Endothelial cell of umbilical vein (primary cell): ENCODE measurements at regions of chr4 and their contacts with region 1.

Region 1: GRCh38 chr4:42519803-42520417 is 122.6 kb downstream of the SHISA3 start:
- DNase-seq: peak; percentile 74
- H3K4me3 ChIP-seq: no peak overlapping the region
- H3K27ac ChIP-seq: no peak overlapping the region
- H3K4me1 ChIP-seq: no peaks in the 10 kb centered on the region
- H3K27me3 ChIP-seq: peaks cover 3 to 7% of the 10 kb centered on the region in 2 experiments
- CTCF ChIP-seq: peak; percentile 25 to 31
- POLR2A ChIP-seq: no peak

Region 2: GRCh38 chr4:42048407-42048806 is 471.5 kb before region 1 on chr4:
- CTCF ChIA-PET with region 1: no interaction called
- POLR2A ChIA-PET with region 1: no interaction called
- dilution Hi-C with region 1: no loop called
- intact Hi-C with region 1: no loop called
- DNase-seq: peak; percentile 75
- H3K4me3 ChIP-seq: no peak overlapping the region
- H3K27ac ChIP-seq: no peak overlapping the region
- H3K4me1 ChIP-seq: peaks cover 6% of the 10 kb centered on the region
- H3K27me3 ChIP-seq: no peaks in the 10 kb centered on the region
- CTCF ChIP-seq: no peak
- POLR2A ChIP-seq: no peak

Region 3: DNA sequence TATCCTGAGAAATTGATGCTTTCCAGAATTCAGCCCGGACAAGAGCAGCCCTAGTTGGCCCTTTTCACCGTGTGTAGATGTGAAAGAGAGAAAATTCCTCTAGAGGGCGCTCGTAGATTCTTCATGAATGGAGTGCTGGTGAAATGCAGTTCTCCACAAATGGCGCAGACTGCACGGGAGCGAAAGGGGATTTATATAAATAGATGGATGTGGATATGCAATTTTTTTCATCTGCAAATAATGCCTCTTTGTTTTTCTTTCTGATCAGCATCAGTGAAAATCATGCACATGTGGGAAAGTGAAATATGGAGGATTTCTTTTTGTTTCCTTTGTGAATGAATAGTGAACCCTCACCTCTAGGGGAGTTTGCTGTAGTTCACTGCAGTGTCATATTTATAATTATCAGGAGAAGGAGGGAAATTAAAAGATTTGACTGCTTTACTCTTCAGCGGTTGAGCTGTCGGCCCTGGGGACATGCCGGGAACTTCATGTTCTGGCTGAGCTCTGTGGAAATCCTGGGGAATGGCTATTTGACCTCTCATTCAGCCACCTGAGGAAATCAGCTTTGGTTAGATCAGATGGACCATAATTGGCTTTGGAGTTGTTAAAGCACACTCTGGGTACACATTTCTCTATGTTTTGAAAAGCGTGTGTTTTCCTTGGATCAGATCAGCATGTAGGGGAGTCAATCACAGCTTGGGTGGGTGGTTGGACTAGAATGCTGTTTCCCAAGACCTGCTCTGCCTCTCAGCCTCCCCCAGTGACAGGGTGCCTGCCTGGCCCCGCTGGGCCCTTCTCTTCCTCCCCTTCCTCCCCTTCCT is 237.6 kb before region 1 on chr4:
- CTCF ChIA-PET with region 1: interaction called, 181 read pairs
- POLR2A ChIA-PET with region 1: no interaction called
- dilution Hi-C with region 1: no loop called
- intact Hi-C with region 1: loop called (anchors 1 kb)
- DNase-seq: peak; percentile 71
- H3K4me3 ChIP-seq: no peak overlapping the region
- H3K27ac ChIP-seq: no peak overlapping the region
- H3K4me1 ChIP-seq: peaks cover 3% of the 10 kb centered on the region
- H3K27me3 ChIP-seq: peaks cover 0 to 4% of the 10 kb centered on the region in 2 experiments
- CTCF ChIP-seq: peak; percentile 56 to 71
- POLR2A ChIP-seq: no peak

Region 4: DNA sequence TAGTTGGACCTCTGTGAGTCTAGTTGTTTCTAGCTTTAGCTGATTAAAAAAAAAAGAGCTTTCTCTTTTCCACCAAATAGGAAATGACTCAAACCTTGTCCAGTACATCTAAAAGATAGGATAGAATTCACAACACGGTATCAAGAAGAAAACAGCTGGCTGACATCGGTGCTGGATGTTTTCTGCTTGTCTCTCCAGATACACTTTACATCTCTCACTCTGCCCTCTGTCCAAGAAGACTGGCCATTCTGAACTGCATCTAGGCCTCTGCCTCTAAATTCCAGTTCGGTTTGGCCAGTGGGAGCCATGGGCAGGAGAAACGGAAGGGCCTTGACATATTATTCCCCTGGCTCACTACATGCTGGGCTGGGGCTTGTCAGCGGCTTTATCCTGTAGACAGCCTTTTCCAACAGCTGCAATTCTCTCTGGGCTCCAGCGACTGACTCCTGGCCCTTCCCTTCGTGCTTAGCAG is 179.9 kb before region 1 on chr4:
- CTCF ChIA-PET with region 1: interaction called, 34 read pairs
- POLR2A ChIA-PET with region 1: no interaction called
- dilution Hi-C with region 1: no loop called
- intact Hi-C with region 1: no loop called
- DNase-seq: peak; percentile 88
- H3K4me3 ChIP-seq: peak overlapping the region in 1 of 3 experiments; percentile 9
- H3K27ac ChIP-seq: peak overlapping the region; percentile 94
- H3K4me1 ChIP-seq: peaks cover 25% of the 10 kb centered on the region
- H3K27me3 ChIP-seq: no peaks in the 10 kb centered on the region
- CTCF ChIP-seq: no peak
- POLR2A ChIP-seq: peak; percentile 57

Region 5: GRCh38 chr4:42377497-42377896 is 142.4 kb before region 1 on chr4:
- CTCF ChIA-PET with region 1: interaction called, 456 read pairs
- POLR2A ChIA-PET with region 1: no interaction called
- dilution Hi-C with region 1: no loop called
- intact Hi-C with region 1: no loop called
- DNase-seq: no peak
- H3K4me3 ChIP-seq: no peak overlapping the region
- H3K27ac ChIP-seq: no peak overlapping the region
- H3K4me1 ChIP-seq: no peaks in the 10 kb centered on the region
- H3K27me3 ChIP-seq: no peaks in the 10 kb centered on the region
- CTCF ChIP-seq: no peak
- POLR2A ChIP-seq: no peak

Region 6: DNA sequence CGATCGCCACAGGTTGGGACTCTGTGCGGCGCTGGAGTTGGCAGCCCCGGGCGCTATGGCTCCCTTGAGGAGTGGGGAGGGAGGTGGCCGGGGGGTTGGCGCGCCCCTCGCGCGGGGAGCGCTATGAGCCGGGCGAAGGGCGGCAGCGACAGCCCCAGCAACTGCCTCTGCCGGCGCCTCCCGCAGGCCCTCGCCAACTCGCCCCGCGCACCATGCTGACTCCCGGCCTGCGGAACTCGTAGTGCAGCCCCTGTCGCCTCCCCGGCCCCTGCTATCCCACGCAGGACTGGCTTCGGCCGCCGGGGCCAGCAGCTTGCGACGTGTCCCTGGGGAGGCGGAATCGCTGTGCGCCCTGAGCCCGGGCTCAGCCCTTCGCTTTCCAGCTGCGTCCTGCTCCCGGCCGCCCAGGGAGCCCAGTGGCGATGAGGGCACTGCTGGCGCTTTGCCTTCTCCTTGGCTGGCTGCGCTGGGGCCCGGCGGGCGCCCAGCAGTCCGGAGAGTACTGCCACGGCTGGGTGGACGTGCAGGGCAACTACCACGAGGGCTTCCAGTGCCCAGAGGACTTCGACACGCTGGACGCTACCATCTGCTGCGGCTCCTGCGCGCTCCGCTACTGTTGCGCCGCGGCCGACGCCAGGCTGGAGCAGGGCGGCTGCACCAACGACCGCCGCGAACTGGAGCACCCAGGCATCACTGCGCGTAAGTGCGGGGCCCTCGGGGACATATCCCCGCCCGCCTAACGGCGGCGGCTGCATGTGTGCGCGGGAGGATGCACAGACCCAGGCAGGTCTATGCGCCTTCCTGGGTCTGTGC is 122.1 kb before region 1 on chr4:
- CTCF ChIA-PET with region 1: interaction called, 54 read pairs
- POLR2A ChIA-PET with region 1: no interaction called
- dilution Hi-C with region 1: no loop called
- intact Hi-C with region 1: loop called (anchors 1 kb)
- DNase-seq: peak; percentile 56
- H3K4me3 ChIP-seq: peak overlapping the region; percentile 55 to 78 (median 75)
- H3K27ac ChIP-seq: peak overlapping the region; percentile 26
- H3K4me1 ChIP-seq: peaks cover 14% of the 10 kb centered on the region
- H3K27me3 ChIP-seq: no peaks in the 10 kb centered on the region
- CTCF ChIP-seq: no peak
- POLR2A ChIP-seq: no peak

Region 7: DNA sequence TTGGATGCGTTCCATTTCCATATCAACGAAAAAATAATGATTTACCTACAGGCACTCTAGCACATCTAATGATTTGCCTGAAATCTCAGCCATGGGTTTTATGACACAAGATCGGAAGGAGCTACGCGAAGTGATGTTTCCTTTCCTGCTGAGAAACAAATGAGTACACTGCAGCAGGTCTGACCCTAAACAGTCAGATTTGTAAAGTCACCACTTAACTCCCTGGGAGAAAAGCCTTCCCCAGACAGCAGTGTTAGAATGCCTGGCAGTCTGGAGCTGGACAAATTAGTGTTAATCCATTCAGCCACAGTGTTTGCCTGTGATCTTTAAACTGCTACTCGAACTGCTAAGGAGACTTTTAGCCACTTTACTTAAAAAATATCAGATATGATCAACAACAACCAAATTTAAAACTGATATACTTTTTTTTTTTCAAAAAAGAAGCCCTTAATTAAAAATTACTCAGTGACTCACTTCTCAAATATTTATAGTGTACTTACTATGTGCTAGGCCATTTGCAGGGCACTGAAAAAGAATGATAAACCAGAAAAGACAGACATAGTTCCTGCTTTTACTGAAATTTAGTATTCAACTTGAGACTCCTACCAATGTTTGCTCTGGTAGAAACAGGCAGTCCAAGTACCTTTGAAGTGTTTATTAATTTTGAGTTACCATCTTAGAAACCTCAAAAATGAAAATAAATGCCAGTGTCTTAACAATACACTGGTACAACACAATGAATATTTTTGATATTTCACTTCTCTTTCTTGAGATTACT is 18.1 kb before region 1 on chr4:
- CTCF ChIA-PET with region 1: interaction called, 13 read pairs
- POLR2A ChIA-PET with region 1: no interaction called
- dilution Hi-C with region 1: no loop called
- intact Hi-C with region 1: no loop called
- DNase-seq: peak; percentile 9
- H3K4me3 ChIP-seq: no peak overlapping the region
- H3K27ac ChIP-seq: no peak overlapping the region
- H3K4me1 ChIP-seq: no peaks in the 10 kb centered on the region
- H3K27me3 ChIP-seq: no peaks in the 10 kb centered on the region
- CTCF ChIP-seq: no peak
- POLR2A ChIP-seq: no peak